Calu3 (cell line): ENCODE measurements at regions of chr14 and their contacts with region 1.

Region 1: GRCh38 chr14:65958664-65959562 is 527.3 kb upstream of the CCDC196 start:
- DNase-seq: no peak
- H3K4me3 Mint-ChIP-seq: no peak overlapping the region
- H3K27ac Mint-ChIP-seq: no peak overlapping the region
- H3K4me1 Mint-ChIP-seq: no peaks in the 10 kb centered on the region
- H3K27me3 Mint-ChIP-seq: peaks cover 32% of the 10 kb centered on the region
- CTCF ChIP-seq: peak; percentile 17

Region 2: DNA sequence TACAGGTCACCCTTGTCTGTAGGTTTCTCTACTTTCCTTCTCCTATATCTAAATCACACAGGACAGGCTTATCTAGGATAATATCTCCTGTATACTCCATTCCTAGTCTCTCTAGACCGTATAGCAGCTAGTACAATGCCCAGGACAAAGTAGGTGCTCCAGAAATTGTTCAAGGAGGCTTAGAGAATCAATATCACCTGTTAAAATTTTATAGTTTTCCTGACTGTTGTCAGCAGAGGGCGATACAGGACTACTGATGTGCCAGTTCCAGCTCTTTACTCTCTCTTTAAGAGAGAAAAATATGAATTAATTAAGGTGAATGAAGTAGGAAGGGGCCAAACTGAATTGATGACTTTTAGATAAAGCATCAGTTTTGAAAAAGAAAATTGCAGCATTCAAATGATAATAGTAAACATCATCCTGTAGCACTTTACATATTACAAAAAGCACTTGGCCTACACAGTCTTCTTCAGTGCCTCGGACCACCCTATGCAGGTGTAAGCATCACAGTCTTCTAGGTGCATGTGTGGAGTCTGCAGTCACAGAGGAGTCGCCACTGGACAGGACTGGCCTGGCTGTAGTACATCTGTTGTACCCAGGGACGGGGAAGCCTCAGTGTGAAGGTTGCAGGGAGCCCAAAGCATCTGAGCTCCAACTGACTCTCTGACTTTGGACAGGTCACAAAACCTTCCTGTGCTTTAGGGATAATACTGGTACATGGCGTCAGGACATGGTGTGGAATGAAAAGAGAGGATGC is 794.7 kb before region 1 on chr14:
- CTCF ChIA-PET with region 1: no interaction called
- intact Hi-C with region 1: loop called (anchors 2 kb)
- DNase-seq: peak; percentile 55
- H3K4me3 Mint-ChIP-seq: no peak overlapping the region
- H3K27ac Mint-ChIP-seq: no peak overlapping the region
- H3K4me1 Mint-ChIP-seq: peaks cover 19% of the 10 kb centered on the region
- H3K27me3 Mint-ChIP-seq: no peaks in the 10 kb centered on the region
- CTCF ChIP-seq: peak; percentile 46

Region 3: GRCh38 chr14:65824285-65824977 is 134.5 kb before region 1 on chr14:
- CTCF ChIA-PET with region 1: interaction called, 6 read pairs
- intact Hi-C with region 1: loop called (anchors 10 kb)
- DNase-seq: peak; percentile 67
- H3K4me3 Mint-ChIP-seq: no peak overlapping the region
- H3K27ac Mint-ChIP-seq: no peak overlapping the region
- H3K4me1 Mint-ChIP-seq: no peaks in the 10 kb centered on the region
- H3K27me3 Mint-ChIP-seq: peaks cover 38% of the 10 kb centered on the region
- CTCF ChIP-seq: peak; percentile 78

Region 4: DNA sequence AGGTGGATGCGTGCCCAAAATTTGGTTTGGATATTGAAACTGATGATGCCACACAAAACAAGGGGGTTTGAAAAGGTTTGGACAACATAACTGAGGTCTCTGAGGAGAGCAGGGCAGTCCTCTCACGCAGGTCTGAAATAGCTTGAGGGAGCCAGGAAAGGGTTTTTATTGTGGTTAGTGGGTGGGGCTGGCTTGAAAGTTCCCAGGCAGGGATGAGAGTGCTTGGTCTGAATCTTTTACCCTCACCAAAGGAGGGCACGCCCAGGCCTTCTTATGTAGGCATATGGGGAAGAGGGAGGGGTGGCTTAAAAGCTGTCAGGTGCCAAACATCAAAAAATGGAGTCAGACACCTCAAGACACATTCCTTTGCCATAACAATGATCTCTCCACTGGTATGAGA is 34.2 kb after region 1 on chr14:
- CTCF ChIA-PET with region 1: no interaction called
- intact Hi-C with region 1: no loop called
- DNase-seq: no peak
- H3K4me3 Mint-ChIP-seq: no peak overlapping the region
- H3K27ac Mint-ChIP-seq: no peak overlapping the region
- H3K4me1 Mint-ChIP-seq: no peaks in the 10 kb centered on the region
- H3K27me3 Mint-ChIP-seq: peaks cover 62% of the 10 kb centered on the region
- CTCF ChIP-seq: no peak

Region 5: GRCh38 chr14:66070509-66071319 is 111.8 kb after region 1 on chr14:
- CTCF ChIA-PET with region 1: no interaction called
- intact Hi-C with region 1: loop called (anchors 2 kb)
- DNase-seq: peak; percentile 76
- H3K4me3 Mint-ChIP-seq: no peak overlapping the region
- H3K27ac Mint-ChIP-seq: no peak overlapping the region
- H3K4me1 Mint-ChIP-seq: no peaks in the 10 kb centered on the region
- H3K27me3 Mint-ChIP-seq: peaks cover 43% of the 10 kb centered on the region
- CTCF ChIP-seq: peak; percentile 81